Activated naive CD4-positive, alpha-beta T cell treated with anti-CD3 and anti-CD28 coated beads for 36 hours (primary cell): ENCODE measurements at regions of chr1 and their contacts with region 1.

Region 1: DNA sequence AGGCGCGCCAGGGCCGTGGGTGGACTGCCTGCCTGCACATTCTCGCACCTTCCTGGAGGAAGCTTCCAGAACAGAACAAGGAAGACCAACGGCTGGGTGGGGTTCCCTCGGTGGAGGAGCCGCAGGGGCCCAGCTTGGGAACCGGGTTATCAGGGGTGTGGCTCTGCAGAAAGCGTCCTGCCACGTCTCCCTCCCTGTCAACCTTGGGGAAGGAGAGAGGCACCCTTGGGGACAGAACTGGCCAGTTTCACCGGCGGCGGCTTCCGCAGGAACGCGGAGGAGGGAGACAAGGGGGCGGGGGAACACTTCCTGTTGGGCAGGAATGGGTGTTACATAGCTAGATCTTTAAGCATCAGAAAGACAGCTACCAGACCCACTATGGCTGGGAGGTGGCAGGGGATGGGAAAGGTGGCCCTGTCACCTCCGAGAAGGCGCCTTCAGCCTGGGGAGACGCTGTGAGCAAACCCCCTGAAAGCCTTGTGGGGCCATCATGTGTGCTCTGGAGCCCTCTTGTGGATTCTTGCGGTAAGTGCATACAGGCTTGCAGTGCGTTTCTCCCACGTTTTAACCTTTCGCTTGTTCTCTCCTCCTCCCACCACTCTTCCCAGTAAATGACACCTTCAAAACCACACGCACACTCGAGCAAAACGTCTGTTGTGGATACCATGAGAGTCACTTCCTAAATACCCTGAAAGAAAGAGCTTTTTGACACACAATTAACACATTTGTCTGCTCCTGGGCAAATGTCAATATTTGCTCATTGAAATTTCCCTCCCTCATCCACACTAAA is 3.8 kb upstream of the PLEKHA6 start:
- DNase-seq: peak; percentile 84
- H3K4me3 Mint-ChIP-seq: peak overlapping the region; percentile 38
- H3K27ac Mint-ChIP-seq: peak overlapping the region; percentile 52
- H3K4me1 Mint-ChIP-seq: peaks cover 19% of the 10 kb centered on the region
- H3K27me3 Mint-ChIP-seq: peaks cover 5% of the 10 kb centered on the region

Region 2: GRCh38 chr1:204190212-204191211 is 173.0 kb before region 1 on chr1:
- CTCF ChIA-PET with region 1: interaction called, 14 read pairs
- intact Hi-C with region 1: no loop called
- DNase-seq: peak; percentile 52
- H3K4me3 Mint-ChIP-seq: peak overlapping the region; percentile 0
- H3K27ac Mint-ChIP-seq: no peak overlapping the region
- H3K4me1 Mint-ChIP-seq: peaks cover 22% of the 10 kb centered on the region
- H3K27me3 Mint-ChIP-seq: peaks cover 38% of the 10 kb centered on the region

Region 3: DNA sequence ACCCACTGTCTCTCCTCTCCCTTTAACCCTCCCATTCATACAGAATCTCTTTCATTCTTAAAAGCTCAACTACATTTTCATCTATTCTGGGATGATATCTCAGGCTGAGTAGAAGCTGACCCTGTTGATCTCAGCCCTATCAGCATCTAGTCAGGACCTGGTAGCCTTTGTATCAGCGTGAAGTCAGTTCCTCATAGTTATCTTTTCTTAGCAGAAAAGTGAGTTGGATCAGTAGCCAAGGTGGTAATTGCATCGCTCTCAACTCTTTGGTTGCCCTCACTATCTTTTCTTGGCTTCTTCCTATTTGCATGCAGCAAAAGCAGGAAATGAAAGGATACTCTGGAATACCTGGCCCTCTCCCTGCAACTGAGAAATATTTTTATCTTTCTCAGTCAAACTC is 136.2 kb before region 1 on chr1:
- CTCF ChIA-PET with region 1: interaction called, 12 read pairs
- intact Hi-C with region 1: no loop called
- DNase-seq: no peak
- H3K4me3 Mint-ChIP-seq: no peak overlapping the region
- H3K27ac Mint-ChIP-seq: no peak overlapping the region
- H3K4me1 Mint-ChIP-seq: no peaks in the 10 kb centered on the region
- H3K27me3 Mint-ChIP-seq: no peaks in the 10 kb centered on the region

Region 4: DNA sequence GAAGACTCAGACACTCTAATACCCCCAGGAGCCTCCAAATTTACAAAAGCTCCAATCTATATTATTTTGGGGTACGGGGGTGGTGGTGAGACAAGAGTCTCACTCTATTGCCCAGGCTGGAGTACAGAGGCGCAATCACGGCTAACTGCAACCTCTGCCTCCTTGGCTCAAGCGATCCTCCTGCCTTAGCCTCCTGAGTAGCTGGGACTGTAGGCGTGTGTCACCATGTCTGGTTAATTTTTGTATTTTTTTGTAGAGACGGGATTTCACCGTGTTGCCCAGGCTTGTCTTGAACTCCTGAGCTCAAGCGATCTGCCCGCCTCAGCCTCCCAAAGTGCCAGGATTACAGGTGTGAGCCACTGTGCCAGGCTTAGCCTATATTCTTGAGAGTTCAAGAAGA is 59.9 kb before region 1 on chr1:
- CTCF ChIA-PET with region 1: interaction called, 4 read pairs
- intact Hi-C with region 1: loop called (anchors 1 kb)
- DNase-seq: no peak
- H3K4me3 Mint-ChIP-seq: no peak overlapping the region
- H3K27ac Mint-ChIP-seq: no peak overlapping the region
- H3K4me1 Mint-ChIP-seq: no peaks in the 10 kb centered on the region
- H3K27me3 Mint-ChIP-seq: peaks cover 4% of the 10 kb centered on the region

Region 5: GRCh38 chr1:204353213-204353910 is 10.2 kb before region 1 on chr1:
- CTCF ChIA-PET with region 1: interaction called, 14 read pairs
- intact Hi-C with region 1: no loop called
- DNase-seq: no peak
- H3K4me3 Mint-ChIP-seq: no peak overlapping the region
- H3K27ac Mint-ChIP-seq: no peak overlapping the region
- H3K4me1 Mint-ChIP-seq: peaks cover 3% of the 10 kb centered on the region
- H3K27me3 Mint-ChIP-seq: no peaks in the 10 kb centered on the region

Region 6: DNA sequence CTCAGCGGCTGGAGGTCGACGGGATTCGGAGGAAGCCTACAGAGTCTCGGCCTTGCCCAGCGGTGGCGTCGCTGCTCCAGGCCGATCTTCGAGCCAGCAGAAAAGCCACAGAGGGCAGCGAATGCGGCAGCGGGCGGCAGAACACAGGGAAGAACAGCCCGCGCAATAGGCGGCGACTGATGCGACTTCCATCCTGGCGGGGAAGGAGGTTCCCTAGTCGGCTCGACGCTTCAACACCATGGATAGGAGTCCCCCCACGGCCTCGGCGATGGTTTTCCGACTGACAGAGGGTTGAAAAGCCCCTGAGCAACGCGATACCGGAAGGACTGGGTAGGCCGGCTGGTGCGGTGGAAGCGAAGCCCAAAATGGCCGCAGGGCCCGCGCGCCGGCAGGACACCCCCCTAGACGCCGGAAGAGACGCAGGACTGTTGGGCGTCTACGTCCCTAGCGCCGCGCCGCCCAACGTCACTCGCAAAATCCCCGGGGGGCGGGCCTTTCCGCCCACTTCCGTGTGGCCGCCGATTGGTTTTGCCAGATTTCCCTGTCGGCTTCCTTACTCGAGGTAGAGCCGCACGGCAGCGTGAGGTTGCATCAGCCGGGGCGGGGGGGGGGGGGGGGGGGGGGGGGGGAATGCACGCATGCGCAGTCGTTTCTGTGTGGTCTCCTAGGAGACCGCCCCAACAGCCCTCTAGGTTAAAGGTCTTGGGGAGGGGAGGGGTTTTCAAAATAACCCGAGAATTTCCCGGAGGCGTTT is 48.1 kb after region 1 on chr1 and contains the start of gene PPP1R15B:
- CTCF ChIA-PET with region 1: interaction called, 6 read pairs
- intact Hi-C with region 1: loop called (anchors 1 kb)
- DNase-seq: peak; percentile 97
- H3K4me3 Mint-ChIP-seq: peak within 1 kb of the TSS; percentile 99
- H3K27ac Mint-ChIP-seq: peak within 1 kb of the TSS; percentile 99
- H3K4me1 Mint-ChIP-seq: peaks cover 8% of the 10 kb centered on the region
- H3K27me3 Mint-ChIP-seq: no peaks in the 10 kb centered on the region
- total RNA-seq, gene PPP1R15B: 63.7 to 65.6 TPM

Region 7: DNA sequence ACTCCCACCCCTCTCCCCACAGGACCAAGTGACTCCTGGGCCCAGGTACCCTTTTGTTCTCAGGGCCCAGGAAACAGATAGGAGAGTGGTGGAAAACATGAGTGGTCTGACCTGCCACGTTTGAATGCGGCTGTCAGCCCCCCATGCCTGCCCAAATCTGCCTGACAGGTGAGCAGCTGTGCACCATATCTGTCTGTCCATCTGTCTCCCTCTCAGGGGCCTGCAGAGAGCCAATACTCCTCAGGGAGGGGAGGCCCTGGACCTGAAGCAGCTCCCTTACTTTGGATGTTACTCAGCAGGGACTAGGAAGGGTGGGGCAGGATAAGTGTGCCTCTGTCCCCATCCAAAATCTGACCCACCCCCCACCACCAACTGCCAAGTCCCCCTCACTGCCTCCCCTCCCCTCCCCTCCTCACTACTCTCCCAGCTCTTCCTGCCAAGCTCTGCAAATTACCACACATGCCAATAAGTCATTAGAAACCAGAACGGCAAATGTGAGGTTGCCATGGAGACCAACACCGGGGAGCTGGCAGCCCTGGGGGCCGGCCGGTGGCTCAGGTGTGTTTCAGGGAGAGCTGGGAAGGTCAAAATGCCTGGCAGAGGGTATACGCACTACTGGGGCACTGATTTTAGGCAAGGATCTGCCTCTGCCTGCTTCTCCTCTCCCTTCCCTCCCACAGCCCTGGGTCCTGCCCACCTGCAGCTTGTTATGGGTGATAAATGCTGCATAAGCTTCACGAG is 310.5 kb after region 1 on chr1:
- CTCF ChIA-PET with region 1: no interaction called
- intact Hi-C with region 1: no loop called
- DNase-seq: no peak
- H3K4me3 Mint-ChIP-seq: no peak overlapping the region
- H3K27ac Mint-ChIP-seq: no peak overlapping the region
- H3K4me1 Mint-ChIP-seq: no peaks in the 10 kb centered on the region
- H3K27me3 Mint-ChIP-seq: peaks cover 3% of the 10 kb centered on the region